Cardiac septum (tissue), 1 donor: ENCODE measurements at regions of chr11 and their contacts with region 1.

Region 1: GRCh38 chr11:14300661-14301304 is 58.2 kb downstream of the RRAS2 start:
- DNase-seq: no peak

Region 2: GRCh38 chr11:14358729-14359439 is 58.1 kb after region 1 on chr11 and contains the start of gene RRAS2:
- intact Hi-C with region 1: loop called (anchors 5 kb)
- DNase-seq: peak; percentile 78
- total RNA-seq, gene RRAS2: 142 TPM

Region 3: DNA sequence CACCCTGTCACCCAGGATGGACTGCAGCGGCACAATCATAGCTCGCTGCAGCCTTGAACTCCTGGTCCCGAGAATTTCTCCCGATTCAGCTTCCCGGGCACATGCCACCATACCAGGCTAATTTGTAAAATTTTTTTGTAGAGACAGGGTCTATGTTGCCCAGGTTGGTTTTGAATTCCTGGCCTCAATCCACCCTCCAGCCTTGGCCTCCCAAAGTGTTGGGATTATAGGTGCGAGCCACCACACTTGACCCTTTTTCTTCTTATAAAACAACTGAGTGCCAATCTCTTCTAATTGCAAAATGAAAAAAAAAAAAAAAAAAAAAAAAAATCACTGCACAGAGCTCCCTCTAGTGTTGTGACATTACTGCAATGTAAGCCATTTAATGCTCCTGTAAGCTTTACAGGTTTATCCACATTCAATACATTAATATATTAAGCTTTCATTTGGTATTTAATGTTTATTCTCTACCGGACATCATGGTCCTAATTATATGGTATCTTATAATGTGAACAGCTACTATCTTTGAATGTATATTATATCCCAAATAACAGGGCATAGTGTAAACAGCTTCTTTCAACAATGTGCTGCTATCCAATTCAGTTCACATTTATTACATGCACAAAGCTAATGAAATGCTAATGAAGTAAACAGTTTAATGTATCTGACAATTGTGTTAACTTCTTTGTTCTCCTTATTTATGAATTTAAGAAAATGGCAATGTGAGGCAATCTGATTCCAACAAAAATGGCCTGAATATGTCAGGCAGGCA is 154.3 kb after region 1 on chr11:
- intact Hi-C with region 1: loop called (anchors 1 kb)
- DNase-seq: no peak